Dendritic cell treated with granulocyte-macrophage colony-stimulating factor and Interleukin-4, amounts not matched to agents 40 ng/mL and 50 ng/mL, for 4 days (primary cell): ENCODE measurements at regions of chr14 and their contacts with region 1.

Region 1: GRCh38 chr14:61103481-61104339 is 122.7 kb downstream of the SLC38A6 start:
- H3K4me3 Mint-ChIP-seq: peak overlapping the region; percentile 65
- H3K27ac Mint-ChIP-seq: peak overlapping the region; percentile 99
- H3K4me1 Mint-ChIP-seq: peaks cover 75% of the 10 kb centered on the region
- H3K27me3 Mint-ChIP-seq: peaks cover 1% of the 10 kb centered on the region

Region 2: GRCh38 chr14:60989599-60989998 is 114.1 kb before region 1 on chr14:
- intact Hi-C with region 1: loop called (anchors 5 kb)
- H3K4me3 Mint-ChIP-seq: no peak overlapping the region
- H3K27ac Mint-ChIP-seq: no peak overlapping the region
- H3K4me1 Mint-ChIP-seq: peaks cover 19% of the 10 kb centered on the region
- H3K27me3 Mint-ChIP-seq: no peaks in the 10 kb centered on the region

Region 3: DNA sequence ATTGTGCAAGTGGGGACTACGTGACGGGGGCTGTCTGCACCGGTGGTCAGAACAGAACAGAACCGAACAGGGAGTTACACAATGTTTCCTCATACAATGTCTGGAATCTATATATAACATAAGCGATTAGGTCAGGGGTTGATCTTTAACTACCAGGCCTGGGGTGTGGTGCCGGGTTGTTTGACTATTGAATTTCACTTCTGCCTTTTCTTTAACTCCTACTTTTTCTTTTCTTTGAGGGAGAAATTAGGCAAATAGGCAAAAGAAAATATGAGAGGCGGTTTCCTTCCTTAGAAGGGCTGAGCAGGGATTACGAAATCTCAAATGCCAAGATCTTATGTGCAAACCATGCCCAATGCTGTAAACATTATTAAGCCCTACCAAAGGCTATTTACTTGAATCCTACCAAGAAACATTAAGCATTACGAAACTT is 17.7 kb after region 1 on chr14:
- intact Hi-C with region 1: loop called (anchors 2 kb)
- H3K4me3 Mint-ChIP-seq: no peak overlapping the region
- H3K27ac Mint-ChIP-seq: peak overlapping the region; percentile 60
- H3K4me1 Mint-ChIP-seq: peaks cover 36% of the 10 kb centered on the region
- H3K27me3 Mint-ChIP-seq: peaks cover 6% of the 10 kb centered on the region

Region 4: GRCh38 chr14:61229475-61229888 is 125.8 kb after region 1 on chr14:
- intact Hi-C with region 1: no loop called
- H3K4me3 Mint-ChIP-seq: no peak overlapping the region
- H3K27ac Mint-ChIP-seq: no peak overlapping the region
- H3K4me1 Mint-ChIP-seq: peaks cover 5% of the 10 kb centered on the region
- H3K27me3 Mint-ChIP-seq: peaks cover 32% of the 10 kb centered on the region

Region 5: DNA sequence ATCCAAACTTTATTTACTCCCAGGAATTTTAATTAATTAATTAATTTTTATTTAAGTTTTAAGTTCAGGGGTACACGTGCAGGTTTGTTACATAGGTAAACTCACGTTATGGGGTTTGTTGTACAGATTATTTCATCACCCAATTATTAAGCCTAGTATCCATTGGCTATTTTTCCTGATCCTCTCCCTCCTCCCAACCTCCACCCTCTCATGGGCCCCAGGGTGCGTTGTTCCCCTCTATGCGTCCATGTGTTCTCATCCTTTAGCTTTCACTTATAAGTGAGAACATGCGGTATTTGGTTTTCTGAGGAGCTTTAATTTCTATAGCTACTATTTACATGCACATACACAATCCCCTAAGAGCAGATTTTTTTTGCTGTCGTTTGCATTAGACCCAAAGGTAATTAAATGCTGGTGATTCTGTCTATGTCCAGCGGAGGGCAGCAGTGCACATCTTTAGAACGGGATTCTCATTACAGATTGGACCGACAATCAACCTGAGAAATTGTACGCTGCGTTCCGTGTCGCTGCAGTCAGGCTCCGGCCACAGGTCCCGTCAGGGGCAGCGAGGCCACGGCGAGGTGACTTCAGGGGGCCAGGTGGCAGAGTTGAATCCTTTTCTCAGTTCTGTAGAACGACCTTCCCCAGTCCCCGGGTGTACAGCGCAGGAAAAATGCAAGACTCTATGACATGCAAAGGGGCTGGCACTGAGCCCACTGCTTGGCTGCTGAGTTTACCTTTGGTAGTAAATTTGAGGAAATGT is 165.8 kb after region 1 on chr14:
- intact Hi-C with region 1: no loop called
- H3K4me3 Mint-ChIP-seq: peak overlapping the region; percentile 45
- H3K27ac Mint-ChIP-seq: no peak overlapping the region
- H3K4me1 Mint-ChIP-seq: peaks cover 5% of the 10 kb centered on the region
- H3K27me3 Mint-ChIP-seq: peaks cover 54% of the 10 kb centered on the region